ENCODE measurements at regions of chr14 and their contacts with region 1.

Region 1: DNA sequence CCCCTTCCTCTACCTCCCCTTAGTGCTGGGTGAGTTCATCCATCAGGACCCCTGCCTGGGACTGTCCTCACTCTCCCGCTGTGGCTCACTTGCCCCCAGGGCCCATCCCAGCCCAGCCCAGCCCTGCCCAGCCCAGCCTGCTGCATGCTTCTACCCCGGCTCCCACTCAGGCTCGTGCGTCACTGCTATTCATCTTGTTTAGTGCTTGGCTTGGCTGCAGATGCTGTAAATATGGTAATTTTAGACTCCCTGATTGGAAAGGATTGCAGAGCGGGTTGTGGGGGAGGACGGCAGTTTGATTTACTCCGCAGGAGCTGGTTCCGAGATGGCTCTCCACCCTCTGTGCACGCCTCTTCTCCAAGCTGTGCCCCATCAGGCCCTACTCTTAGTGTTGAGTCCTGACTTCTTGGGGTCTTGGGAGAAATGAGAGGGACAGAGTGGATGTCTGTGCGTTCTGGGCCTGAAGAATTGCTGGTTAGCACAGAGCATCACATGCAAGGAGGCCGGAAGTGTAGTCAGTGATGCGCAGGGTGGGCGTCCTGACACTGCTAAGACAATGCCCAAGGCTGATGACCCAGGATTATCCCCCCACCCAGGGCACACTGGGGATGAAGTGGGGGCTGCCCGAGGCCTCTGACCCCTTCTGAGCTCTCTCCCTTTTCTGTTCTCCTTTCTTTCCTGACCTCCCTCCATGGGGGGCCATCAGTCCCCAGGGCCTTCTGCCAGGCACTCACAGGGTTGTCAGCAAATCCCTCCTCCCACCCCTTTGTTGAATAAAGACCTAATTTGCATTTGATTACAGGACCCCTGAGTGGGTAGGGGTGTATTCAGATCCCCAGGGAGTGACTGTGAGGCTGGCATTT is 244.4 kb downstream of the ZFP36L1 start:
- DNase-seq: peak; percentile 97
- ATAC-seq: peak; percentile 82
- H3K4me3 ChIP-seq: peak overlapping the region; percentile 13; the same call in 1 of the 2 replicates
- H3K27ac ChIP-seq: peak overlapping the region; percentile 98
- H3K4me1 ChIP-seq: peaks cover 47% of the 10 kb centered on the region
- H3K27me3 ChIP-seq: no peaks in the 10 kb centered on the region
- CTCF ChIP-seq: no peak

Region 2: GRCh38 chr14:67943947-67944346 is 604.5 kb before region 1 on chr14:
- CTCF ChIA-PET with region 1: interaction called, 4 read pairs
- POLR2A ChIA-PET with region 1: no interaction called
- intact Hi-C with region 1: loop called (anchors 5 kb)
- DNase-seq: peak; percentile 93
- ATAC-seq: peak; percentile 29; the same call in 1 of the 2 replicates
- H3K4me3 ChIP-seq: no peak overlapping the region
- H3K27ac ChIP-seq: 0 out of 2 replicates have a peak overlapping the region, but pooled peaks have one; percentile 1
- H3K4me1 ChIP-seq: peaks cover 34% of the 10 kb centered on the region
- H3K27me3 ChIP-seq: no peaks in the 10 kb centered on the region
- CTCF ChIP-seq: peak; percentile 96

Region 3: GRCh38 chr14:68449561-68450295 is 98.7 kb before region 1 on chr14:
- CTCF ChIA-PET with region 1: no interaction called
- POLR2A ChIA-PET with region 1: no interaction called
- intact Hi-C with region 1: loop called (anchors 1 kb)
- DNase-seq: no peak
- ATAC-seq: no peak
- H3K4me3 ChIP-seq: no peak overlapping the region
- H3K27ac ChIP-seq: no peak overlapping the region
- H3K4me1 ChIP-seq: peaks cover 24% of the 10 kb centered on the region
- H3K27me3 ChIP-seq: no peaks in the 10 kb centered on the region
- CTCF ChIP-seq: no peak

Region 4: DNA sequence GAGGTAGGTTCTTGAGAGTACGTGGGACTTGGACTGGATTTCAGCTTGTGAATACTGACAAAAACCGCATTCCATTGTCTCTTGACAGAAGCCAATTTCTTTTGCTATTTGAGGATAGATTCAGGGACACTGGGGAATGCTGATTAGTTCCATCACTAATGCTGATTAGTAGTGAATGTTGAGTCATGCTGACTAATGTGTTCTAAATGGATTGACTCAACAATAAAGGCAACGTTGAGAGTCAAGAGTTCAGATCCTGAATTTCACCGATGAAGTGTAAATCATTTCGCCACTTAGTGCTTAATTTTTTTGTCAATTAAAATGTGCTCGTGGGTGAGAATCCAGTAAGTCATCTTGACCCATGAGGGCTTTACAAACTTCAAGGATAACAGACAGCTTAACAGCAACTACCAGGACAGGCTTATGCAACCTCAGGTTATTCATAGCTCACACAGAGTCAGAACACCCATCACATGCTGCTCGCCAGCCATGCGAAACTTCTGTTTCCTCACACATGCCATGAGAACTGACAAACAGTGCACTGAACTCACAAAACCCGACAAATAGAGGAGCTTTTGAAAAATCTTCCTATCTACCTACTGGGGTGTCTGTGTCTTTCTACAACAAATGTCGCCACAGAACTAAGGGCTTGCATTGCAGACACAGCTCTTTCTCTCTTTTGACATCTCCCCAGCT is 72.1 kb before region 1 on chr14:
- CTCF ChIA-PET with region 1: no interaction called
- POLR2A ChIA-PET with region 1: no interaction called
- intact Hi-C with region 1: no loop called
- DNase-seq: peak; percentile 85
- ATAC-seq: peak; percentile 64
- H3K4me3 ChIP-seq: no peak overlapping the region
- H3K27ac ChIP-seq: peak overlapping the region; percentile 43
- H3K4me1 ChIP-seq: peaks cover 28% of the 10 kb centered on the region
- H3K27me3 ChIP-seq: no peaks in the 10 kb centered on the region
- CTCF ChIP-seq: no peak

Region 5: DNA sequence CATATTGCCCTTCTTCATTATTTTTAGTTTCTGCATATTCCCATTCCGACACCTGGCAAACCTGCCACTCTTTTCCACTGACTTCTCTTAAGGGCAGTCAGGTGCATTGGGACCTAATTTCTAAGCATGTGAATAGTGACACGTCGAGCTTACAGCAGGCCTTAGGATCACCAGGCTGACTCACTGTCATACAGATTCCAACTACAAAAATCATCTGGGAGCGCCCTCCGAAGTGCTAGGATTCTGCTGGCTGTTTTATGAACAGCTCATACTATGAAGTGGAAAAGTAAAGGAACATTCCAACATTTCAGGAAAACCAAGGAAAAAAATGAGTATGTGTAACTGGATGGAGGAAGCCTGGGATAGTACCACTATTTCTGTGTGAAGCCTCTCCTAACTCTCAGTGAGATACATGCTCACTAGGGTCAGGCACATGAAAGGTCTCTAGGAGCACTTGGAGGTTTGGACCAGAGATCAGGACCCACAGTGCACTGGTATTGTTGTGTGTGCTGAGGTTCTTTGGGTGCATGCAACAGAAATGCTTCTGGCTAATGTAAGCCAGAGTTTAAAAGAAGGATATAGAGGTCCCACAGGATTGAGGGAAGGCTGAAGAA is 12.9 kb before region 1 on chr14:
- CTCF ChIA-PET with region 1: interaction called, 3 read pairs
- POLR2A ChIA-PET with region 1: interaction called, 5 read pairs
- intact Hi-C with region 1: loop called (anchors 1 kb)
- DNase-seq: peak; percentile 92
- ATAC-seq: peak; percentile 98
- H3K4me3 ChIP-seq: no peak overlapping the region
- H3K27ac ChIP-seq: peak overlapping the region; percentile 67
- H3K4me1 ChIP-seq: peaks cover 12% of the 10 kb centered on the region
- H3K27me3 ChIP-seq: no peaks in the 10 kb centered on the region
- CTCF ChIP-seq: 0 out of 2 replicates have a peak, but pooled peaks have one; percentile 15

Region 6: GRCh38 chr14:68685419-68686204 is 137.2 kb after region 1 on chr14:
- CTCF ChIA-PET with region 1: no interaction called
- POLR2A ChIA-PET with region 1: interaction called, 6 read pairs
- intact Hi-C with region 1: loop called (anchors 2 kb)
- DNase-seq: peak; percentile 95
- ATAC-seq: peak; percentile 67
- H3K4me3 ChIP-seq: no peak overlapping the region
- H3K27ac ChIP-seq: peak overlapping the region; percentile 96
- H3K4me1 ChIP-seq: peaks cover 75% of the 10 kb centered on the region
- H3K27me3 ChIP-seq: no peaks in the 10 kb centered on the region
- CTCF ChIP-seq: no peak

Region 7: DNA sequence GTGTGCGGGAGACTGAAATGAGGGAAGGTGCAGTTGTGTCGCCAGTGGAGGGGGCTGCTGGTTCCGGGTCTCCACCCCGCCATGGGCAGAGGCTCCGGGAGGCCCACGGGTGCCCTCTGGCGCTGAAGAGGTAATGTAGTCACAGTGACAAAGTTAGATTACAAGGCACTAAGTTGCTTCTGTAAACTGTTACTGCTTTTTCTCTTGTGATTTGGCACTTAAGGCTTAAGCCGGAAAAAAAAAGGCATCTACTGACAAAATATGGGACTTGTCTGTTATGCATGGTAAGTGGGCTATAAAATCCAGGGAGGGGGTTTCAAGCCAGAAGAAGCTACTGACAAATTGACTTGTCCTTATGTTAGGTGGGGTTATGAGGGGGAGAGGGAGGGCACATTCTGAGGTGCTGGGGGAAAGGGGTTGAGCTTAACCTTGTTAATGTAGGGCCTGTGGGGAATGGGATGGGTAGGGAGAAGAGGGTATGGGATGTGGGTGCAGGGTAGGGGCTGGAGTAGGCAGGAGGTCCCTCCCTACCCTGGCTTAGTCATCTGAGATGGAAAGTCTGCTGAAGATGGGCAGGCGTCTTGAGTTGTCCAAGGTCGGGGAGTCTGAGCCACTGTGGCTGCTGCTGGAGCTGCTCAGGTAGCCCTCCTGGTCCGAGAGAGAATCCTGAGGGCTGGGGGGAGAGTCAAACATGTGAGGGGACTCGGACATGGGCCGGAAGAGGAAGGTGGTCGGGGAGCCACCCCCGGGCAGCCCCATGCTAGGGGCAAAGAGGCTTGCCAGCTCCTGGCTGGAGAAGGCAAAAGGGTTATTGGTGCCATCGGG is 240.8 kb after region 1 on chr14:
- CTCF ChIA-PET with region 1: interaction called, 3 read pairs
- POLR2A ChIA-PET with region 1: interaction called, 18 read pairs
- intact Hi-C with region 1: loop called (anchors 2 kb)
- DNase-seq: peak; percentile 89
- ATAC-seq: peak; percentile 19
- H3K4me3 ChIP-seq: peak overlapping the region; percentile 90
- H3K27ac ChIP-seq: peak overlapping the region; percentile 97
- H3K4me1 ChIP-seq: peaks cover 56% of the 10 kb centered on the region
- H3K27me3 ChIP-seq: no peaks in the 10 kb centered on the region
- CTCF ChIP-seq: peak; percentile 86

Measured in PC-3 (cell line).